ENCODE measurements at regions of chr6 and their contacts with region 1.

Region 1: DNA sequence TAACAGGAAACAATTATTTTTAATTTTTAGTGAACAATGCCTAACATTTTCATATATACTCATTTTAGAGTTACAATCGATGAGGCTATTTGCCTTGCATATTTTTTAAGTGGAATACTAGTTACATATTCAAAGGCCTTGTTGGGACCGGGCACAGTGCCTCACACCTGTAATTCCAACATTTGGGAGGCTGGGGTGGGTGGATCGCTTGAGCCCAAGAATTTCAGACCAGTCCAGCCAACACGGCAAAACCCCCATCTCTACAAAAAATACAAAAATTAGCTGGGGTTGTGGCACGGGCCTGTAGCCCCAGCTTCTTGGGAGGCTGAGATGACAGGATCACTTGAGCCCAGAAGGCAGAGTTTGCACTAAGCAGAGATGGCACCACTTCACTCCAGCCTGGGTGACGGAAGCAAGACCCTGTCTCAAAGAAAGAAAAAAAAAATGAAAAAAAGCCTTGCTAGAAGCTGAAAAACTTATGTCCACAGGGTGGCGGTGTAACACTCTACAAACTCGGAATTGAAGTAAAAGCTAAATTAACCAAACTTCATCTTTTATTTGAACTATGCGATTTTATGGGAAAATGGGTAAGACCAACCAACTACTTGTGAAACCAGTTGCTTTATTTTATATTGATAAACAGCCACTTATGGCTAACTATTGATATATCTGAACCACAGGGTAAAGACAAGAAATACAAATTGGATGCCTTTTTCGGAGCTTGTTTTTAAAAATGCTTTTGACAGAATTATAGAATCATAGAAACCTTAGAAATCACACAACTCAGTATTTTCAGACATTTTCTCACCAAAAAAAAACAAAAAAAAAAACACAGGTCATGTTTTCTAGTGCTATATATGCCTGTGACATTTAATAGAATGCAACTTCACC is 24.1 kb upstream of the ROS1 start:
- DNase-seq: peak; percentile 31
- H3K4me3 Mint-ChIP-seq: no peak overlapping the region
- H3K27ac Mint-ChIP-seq: no peak overlapping the region
- H3K4me1 Mint-ChIP-seq: no peaks in the 10 kb centered on the region
- H3K27me3 Mint-ChIP-seq: peaks cover 40% of the 10 kb centered on the region

Region 2: DNA sequence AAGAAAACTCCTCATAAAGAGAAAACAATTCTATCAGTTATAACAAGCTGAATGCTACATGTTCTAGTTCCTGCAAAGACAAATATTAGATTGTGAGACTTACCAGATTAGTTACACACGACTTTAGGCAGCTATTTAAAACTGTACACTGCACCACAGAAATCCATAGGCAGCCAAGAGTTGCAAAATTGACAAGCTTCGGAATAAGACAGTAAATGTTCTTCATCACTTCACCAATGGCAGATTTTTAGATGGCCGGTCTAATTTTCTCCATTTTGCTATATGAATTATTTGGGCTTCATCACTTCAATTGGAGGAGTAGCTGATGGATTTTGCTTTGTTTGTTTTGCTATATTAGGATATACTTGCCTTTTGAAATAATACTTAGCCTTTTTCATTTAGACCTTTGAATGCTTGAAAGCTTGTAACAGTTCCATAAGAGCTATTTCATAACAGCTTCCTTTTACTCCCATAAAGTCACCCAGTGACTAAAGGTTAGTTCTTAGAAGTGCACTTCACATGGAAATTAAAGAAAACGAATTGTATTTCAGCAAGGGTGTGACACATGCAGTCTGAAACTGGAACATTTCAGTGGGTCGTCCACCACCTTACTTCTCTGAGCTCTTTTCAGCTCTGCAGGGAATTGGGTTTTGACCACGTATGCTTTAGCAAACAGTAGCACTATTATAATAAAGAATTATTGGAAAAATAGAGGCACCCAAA is 24.2 kb before region 1 on chr6 and contains the start of gene ROS1:
- intact Hi-C with region 1: no loop called
- DNase-seq: no peak
- H3K4me3 Mint-ChIP-seq: no peak within 1 kb of the TSS
- H3K27ac Mint-ChIP-seq: no peak within 1 kb of the TSS
- H3K4me1 Mint-ChIP-seq: no peaks in the 10 kb centered on the region
- H3K27me3 Mint-ChIP-seq: peaks cover 20% of the 10 kb centered on the region
- total RNA-seq, gene ROS1: not detected in 2 replicates

Region 3: DNA sequence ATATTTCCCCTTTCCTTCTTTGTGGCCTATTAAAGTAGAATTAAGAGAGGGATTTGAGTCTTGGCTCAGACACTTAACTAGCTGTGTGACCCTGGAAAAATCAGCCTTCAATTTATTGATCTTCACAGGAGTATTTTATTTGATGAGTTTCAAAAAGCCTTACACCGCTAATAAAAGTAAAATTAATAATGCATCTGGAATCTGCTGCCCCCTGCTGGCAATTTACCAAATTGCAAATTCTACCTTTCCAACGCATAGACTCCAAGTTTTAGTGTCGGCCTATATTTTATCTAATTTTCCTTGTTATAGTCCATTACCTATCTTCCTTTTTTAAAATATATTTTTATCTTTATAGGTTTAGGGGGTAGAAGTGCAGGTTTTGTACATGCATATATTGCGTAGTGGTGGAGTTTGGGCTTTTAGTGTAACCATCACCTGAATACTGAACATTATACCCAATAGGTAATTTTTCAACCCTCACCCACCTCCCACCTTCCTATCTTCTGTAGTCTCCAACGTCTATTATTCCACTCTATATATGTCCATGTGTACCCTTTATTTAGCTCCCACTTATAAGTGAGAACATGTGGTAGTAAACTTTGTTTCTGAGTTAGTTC is 106.2 kb after region 1 on chr6:
- intact Hi-C with region 1: loop called (anchors 1 kb)
- DNase-seq: peak; percentile 9
- H3K4me3 Mint-ChIP-seq: no peak overlapping the region
- H3K27ac Mint-ChIP-seq: no peak overlapping the region
- H3K4me1 Mint-ChIP-seq: peaks cover 1% of the 10 kb centered on the region
- H3K27me3 Mint-ChIP-seq: peaks cover 3% of the 10 kb centered on the region